AG04450 (cell line): ENCODE measurements at regions of chr6 and their contacts with region 1.

Region 1: GRCh38 chr6:26216356-26216885 is 129.2 kb downstream of the HFE start:
- DNase-seq: peak; percentile 99
- H3K4me3 ChIP-seq: peak overlapping the region; percentile 80
- H3K27ac ChIP-seq: peak overlapping the region; percentile 99
- H3K27me3 ChIP-seq: no peaks in the 10 kb centered on the region
- CTCF ChIP-seq: no peak

Region 2: GRCh38 chr6:26003102-26003694 is 213.2 kb before region 1 on chr6:
- CTCF ChIA-PET with region 1: no interaction called
- POLR2A ChIA-PET with region 1: no interaction called
- DNase-seq: no peak
- H3K4me3 ChIP-seq: no peak overlapping the region
- H3K27ac ChIP-seq: no peak overlapping the region
- H3K27me3 ChIP-seq: no peaks in the 10 kb centered on the region
- CTCF ChIP-seq: peak; percentile 86

Region 3: DNA sequence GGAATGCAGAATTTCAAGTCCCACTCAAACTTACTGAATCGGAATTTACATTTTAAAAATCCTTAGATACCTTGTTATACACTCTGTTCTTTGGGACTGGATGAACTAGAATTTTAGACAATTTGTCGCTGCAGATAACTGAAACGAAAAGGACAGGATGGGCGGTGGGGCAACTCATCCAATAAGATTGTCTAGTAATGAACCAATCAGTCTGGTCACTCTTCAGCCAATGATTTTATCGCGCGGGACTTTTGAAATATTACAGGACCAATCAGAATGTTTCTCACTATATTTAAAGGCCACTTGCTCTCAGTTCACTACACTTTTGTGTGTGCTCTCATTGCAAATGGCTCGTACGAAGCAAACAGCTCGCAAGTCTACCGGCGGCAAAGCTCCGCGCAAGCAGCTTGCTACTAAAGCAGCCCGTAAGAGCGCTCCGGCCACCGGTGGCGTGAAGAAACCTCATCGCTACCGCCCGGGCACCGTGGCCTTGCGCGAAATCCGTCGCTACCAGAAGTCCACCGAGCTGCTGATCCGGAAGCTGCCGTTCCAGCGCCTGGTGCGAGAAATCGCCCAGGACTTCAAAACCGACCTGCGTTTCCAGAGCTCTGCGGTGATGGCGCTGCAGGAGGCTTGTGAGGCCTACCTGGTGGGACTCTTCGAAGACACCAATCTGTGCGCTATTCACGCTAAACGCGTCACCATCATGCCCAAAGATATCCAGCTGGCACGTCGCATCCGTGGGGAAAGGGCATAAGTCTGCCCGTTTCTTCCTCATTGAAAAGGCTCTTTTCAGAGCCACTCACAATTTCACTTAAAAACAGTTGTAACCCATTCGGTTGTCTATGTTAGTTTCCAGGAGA is 171.1 kb before region 1 on chr6:
- CTCF ChIA-PET with region 1: no interaction called
- POLR2A ChIA-PET with region 1: interaction called, 11 read pairs
- DNase-seq: peak; percentile 82
- H3K4me3 ChIP-seq: peak overlapping the region; percentile 66
- H3K27ac ChIP-seq: peak overlapping the region; percentile 63
- H3K27me3 ChIP-seq: no peaks in the 10 kb centered on the region
- CTCF ChIP-seq: peak; percentile 19; the same call in 1 of the 2 replicates

Region 4: GRCh38 chr6:26183581-26184366 is 32.6 kb before region 1 on chr6:
- CTCF ChIA-PET with region 1: interaction called, 3 read pairs
- POLR2A ChIA-PET with region 1: interaction called, 43 read pairs
- DNase-seq: peak; percentile 72
- H3K4me3 ChIP-seq: peak overlapping the region; percentile 61
- H3K27ac ChIP-seq: peak overlapping the region; percentile 71
- H3K27me3 ChIP-seq: no peaks in the 10 kb centered on the region
- CTCF ChIP-seq: no peak

Region 5: GRCh38 chr6:26234421-26235296 is 18.2 kb after region 1 on chr6:
- CTCF ChIA-PET with region 1: interaction called, 7 read pairs
- POLR2A ChIA-PET with region 1: interaction called, 52 read pairs
- DNase-seq: no peak
- H3K4me3 ChIP-seq: peak overlapping the region; percentile 65
- H3K27ac ChIP-seq: peak overlapping the region; percentile 91
- H3K27me3 ChIP-seq: no peaks in the 10 kb centered on the region
- CTCF ChIP-seq: no peak

Region 6: DNA sequence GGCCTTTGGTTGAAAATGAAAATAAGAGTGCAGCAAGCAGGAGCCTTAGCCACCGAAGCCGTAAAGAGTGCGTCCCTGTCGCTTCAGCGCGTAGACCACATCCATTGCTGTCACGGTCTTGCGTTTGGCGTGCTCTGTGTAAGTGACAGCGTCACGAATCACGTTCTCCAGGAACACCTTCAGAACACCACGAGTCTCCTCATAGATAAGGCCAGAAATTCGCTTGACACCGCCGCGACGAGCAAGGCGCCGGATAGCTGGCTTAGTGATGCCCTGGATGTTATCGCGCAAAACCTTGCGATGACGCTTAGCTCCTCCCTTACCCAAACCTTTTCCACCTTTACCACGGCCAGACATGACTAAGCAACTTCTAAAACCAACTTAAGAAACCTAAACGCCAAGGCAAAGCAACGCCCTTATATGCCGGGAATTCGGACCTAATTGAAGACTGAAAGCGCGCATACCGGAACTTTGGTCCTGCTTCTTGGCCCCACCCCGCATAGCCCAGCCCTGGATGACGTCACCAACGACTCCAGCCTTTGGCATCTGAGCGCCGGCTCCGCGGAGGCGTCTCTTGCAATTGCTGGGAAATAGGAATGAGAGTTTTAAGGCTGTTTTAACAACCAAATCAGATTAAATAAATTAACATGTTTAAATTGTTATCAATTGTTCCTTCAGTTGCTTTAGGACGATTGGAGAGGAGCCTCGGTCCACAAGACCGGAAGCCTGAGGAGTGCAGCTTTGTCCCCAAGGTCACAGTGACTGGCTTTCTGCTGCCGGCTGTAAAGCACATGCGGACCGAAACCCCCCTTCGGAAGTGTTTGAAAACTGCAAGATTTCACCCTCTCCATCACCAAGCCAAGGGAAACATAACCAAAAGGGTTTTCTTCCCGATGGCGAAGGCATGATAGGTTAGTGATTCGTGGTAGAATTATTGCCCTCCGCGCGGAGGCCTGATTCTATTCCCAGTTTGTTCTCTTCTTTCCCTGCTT is 69.0 kb after region 1 on chr6:
- CTCF ChIA-PET with region 1: no interaction called
- POLR2A ChIA-PET with region 1: interaction called, 17 read pairs
- DNase-seq: peak; percentile 97
- H3K4me3 ChIP-seq: peak overlapping the region; percentile 99
- H3K27ac ChIP-seq: peak overlapping the region; percentile 98
- H3K27me3 ChIP-seq: no peaks in the 10 kb centered on the region
- CTCF ChIP-seq: no peak

Region 7: GRCh38 chr6:27809939-27810767 is 1593.7 kb after region 1 on chr6:
- CTCF ChIA-PET with region 1: no interaction called
- POLR2A ChIA-PET with region 1: interaction called, 11 read pairs
- DNase-seq: peak; percentile 95
- H3K4me3 ChIP-seq: peak overlapping the region; percentile 85
- H3K27ac ChIP-seq: peak overlapping the region; percentile 96
- H3K27me3 ChIP-seq: no peaks in the 10 kb centered on the region
- CTCF ChIP-seq: peak; percentile 24